ENCODE measurements at regions of chr12 and their contacts with region 1.

Region 1: GRCh38 chr12:96985480-96986362 is 78.7 kb downstream of the NEDD1 start:
- DNase-seq: peak in 1 of 2 donors; percentile 47
- ATAC-seq: peak in 3 of 4 donors; percentile 38 to 62 (median 56)
- H3K4me3 ChIP-seq: peak overlapping the region; percentile 56
- H3K27ac ChIP-seq: no peak overlapping the region
- H3K4me1 ChIP-seq: no peaks in the 10 kb centered on the region
- H3K27me3 ChIP-seq: peaks cover 0 to 18% (median 2%) of the 10 kb centered on the region in 3 donors
- CTCF ChIP-seq: peak; percentile 67

Region 2: GRCh38 chr12:96590970-96591369 is 394.8 kb before region 1 on chr12:
- intact Hi-C with region 1: loop called in 1 of 2 experiments (anchors 10 kb)
- DNase-seq: no peak
- ATAC-seq: no peak
- H3K4me3 ChIP-seq: no peak overlapping the region
- H3K27ac ChIP-seq: no peak overlapping the region
- H3K4me1 ChIP-seq: no peaks in the 10 kb centered on the region
- H3K27me3 ChIP-seq: peaks cover 0 to 2% (median 0%) of the 10 kb centered on the region in 3 donors
- CTCF ChIP-seq: no peak

Region 3: DNA sequence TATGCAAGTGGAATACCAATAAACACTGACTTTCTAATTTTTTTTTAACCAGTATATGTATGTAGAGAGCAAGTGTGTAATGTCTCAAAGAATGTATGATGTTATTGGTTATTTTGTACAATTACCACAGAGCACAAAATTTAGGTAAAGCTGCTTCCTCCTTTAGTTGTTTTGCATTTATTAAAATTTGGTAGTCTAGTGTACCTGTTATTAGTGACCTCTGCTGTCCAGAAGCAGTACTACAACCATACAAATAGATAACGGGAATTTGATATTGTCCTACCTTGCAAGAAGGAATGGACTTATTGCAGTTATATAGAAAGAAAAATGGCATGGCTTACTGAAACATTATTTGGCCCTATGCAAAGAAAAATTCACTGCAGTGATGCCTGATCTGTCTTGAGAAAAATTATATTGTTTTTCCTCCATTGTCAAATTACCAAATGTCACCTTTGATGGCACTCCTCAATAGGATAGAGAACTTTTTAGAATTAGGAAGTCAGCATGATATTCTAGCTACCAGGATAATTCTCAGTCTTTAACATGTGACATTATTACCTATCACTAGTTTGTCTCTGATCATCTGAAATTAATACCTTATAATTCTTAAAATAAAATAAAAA is 323.0 kb after region 1 on chr12:
- intact Hi-C with region 1: loop called in 1 of 2 experiments (anchors 5 kb)
- DNase-seq: no peak
- ATAC-seq: no peak
- H3K4me3 ChIP-seq: no peak overlapping the region
- H3K27ac ChIP-seq: no peak overlapping the region
- H3K4me1 ChIP-seq: no peaks in the 10 kb centered on the region
- H3K27me3 ChIP-seq: peaks cover 0 to 2% (median 0%) of the 10 kb centered on the region in 3 donors
- CTCF ChIP-seq: peak; percentile 66